Esophagus muscularis mucosa (tissue), 4 donors: ENCODE measurements at regions of chr5 and their contacts with region 1.

Region 1: DNA sequence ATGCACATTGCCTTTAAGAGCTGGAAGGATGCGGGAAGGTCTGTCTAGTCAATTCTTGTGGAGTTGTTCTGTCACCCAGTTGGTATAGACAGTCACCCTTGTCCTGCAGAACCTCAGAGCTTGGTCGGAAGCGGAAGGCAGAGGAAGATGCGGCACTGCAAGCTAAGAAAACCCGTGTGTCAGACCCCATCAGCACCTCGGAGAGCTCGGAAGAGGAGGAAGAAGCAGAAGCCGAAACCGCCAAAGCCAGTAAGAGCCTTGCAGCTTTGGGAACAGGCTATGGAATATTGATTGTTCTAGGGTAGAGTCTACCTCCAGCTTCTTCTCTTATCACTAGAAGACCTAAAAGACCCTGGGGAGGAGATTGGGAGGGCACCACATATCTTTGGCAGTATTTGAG is 6.5 kb downstream of the TCOF1 start:
- DNase-seq: no peak
- H3K4me3 ChIP-seq: no peak overlapping the region
- H3K27ac ChIP-seq: no peak overlapping the region
- H3K4me1 ChIP-seq: peaks cover under 1 to 8% (median 4%) of the 10 kb centered on the region in 4 donors
- H3K27me3 ChIP-seq: no peaks in the 10 kb centered on the region
- CTCF ChIP-seq: no peak
- EP300 ChIP-seq: no peak
- POLR2A ChIP-seq: no peak

Region 2: GRCh38 chr5:150320048-150320555 is 43.9 kb before region 1 on chr5:
- intact Hi-C with region 1: no loop called
- DNase-seq: peak; percentile 95
- H3K4me3 ChIP-seq: no peak overlapping the region
- H3K27ac ChIP-seq: peak overlapping the region in 3 of 4 donors; percentile 29 to 55 (median 30)
- H3K4me1 ChIP-seq: peaks cover 2 to 20% (median 14%) of the 10 kb centered on the region in 4 donors
- H3K27me3 ChIP-seq: no peaks in the 10 kb centered on the region
- CTCF ChIP-seq: no peak
- EP300 ChIP-seq: no peak
- POLR2A ChIP-seq: no peak

Region 3: GRCh38 chr5:150419630-150420270 is 55.7 kb after region 1 on chr5:
- intact Hi-C with region 1: loop called (anchors 2 kb)
- DNase-seq: no peak
- H3K4me3 ChIP-seq: no peak overlapping the region
- H3K27ac ChIP-seq: no peak overlapping the region
- H3K4me1 ChIP-seq: no peaks in the 10 kb centered on the region
- H3K27me3 ChIP-seq: no peaks in the 10 kb centered on the region
- CTCF ChIP-seq: no peak
- EP300 ChIP-seq: no peak
- POLR2A ChIP-seq: no peak